OCI-LY7 (cell line): ENCODE measurements at regions of chr5 and their contacts with region 1.

Region 1: DNA sequence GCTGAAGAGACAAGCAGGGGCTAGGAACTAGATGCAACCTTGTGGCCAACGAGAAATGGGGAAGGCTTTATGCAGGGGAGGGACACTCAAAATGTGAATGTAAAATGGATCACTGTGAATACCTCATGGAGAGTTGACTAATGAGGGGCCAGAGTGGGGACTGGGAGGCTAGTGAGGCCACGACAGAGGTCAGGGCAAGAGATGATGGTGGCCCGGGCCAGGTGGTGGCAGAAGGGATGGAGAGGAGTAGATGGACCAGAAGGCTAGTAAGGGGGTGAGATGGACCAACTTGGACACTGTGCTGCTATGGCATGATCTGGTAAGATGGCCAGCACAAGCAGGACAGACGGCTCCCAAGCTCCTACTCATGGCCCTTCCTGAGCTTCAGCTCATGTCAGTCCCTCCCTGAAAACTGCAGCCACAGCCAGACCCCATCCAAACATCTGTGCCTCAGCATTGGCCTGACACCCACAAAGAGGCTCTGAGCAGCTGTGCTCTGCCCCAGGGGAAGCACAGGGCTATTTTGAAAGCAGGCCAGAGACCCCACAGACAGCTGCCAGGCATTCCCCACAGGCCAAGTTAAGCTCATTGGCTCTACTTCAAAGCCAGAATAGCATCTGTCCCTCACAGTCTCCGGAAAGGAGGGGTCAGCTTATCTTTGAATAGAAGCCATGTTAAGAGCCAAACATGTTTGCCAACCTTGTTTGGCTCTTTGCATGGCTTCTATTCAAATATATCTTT is 22.1 kb downstream of the P4HA2 start:
- DNase-seq: peak; percentile 94
- H3K4me3 ChIP-seq: peak overlapping the region; percentile 27
- H3K27ac ChIP-seq: peak overlapping the region; percentile 91
- H3K4me1 ChIP-seq: peaks cover 98% of the 10 kb centered on the region
- CTCF ChIP-seq: no peak

Region 2: GRCh38 chr5:132073231-132074013 is 132.1 kb before region 1 on chr5 and contains the start of gene CSF2:
- CTCF ChIA-PET with region 1: no interaction called
- POLR2A ChIA-PET with region 1: no interaction called
- intact Hi-C with region 1: no loop called
- DNase-seq: no peak
- H3K4me3 ChIP-seq: no peak within 1 kb of the TSS
- H3K27ac ChIP-seq: no peak within 1 kb of the TSS
- H3K4me1 ChIP-seq: no peaks in the 10 kb centered on the region
- CTCF ChIP-seq: no peak
- total RNA-seq, gene CSF2: not detected in 2 replicates

Region 3: DNA sequence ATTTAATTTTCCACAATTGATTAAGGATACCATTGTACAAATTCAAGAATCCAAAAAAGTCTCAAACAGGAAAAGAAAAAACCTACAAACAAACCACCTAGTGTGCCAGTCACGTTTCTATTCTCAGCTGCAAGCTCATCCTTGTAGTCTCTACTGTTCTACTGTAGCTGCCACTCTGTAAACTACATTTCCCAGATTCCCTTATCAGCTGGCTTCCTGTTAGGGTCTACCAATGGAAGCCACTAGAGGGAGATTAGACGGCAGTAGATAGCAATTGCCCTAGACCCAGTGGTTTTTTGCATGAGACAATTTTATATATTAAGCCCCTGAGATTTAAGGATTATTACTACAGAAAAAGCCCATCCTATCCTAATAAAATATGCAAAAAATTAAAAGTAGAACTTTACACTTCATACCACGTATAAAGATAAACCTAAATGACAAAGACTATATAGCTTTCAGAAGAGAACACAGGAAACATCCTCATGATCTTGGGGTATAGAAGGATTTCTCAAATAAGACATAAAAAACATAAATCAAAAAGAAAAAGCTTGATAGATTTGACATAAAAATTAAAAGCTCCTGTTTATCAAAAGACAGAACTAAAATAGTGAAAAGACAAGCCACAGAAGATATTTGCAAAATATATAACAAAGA is 15.3 kb before region 1 on chr5:
- CTCF ChIA-PET with region 1: interaction called, 4 read pairs
- POLR2A ChIA-PET with region 1: interaction called, 12 read pairs
- intact Hi-C with region 1: no loop called
- DNase-seq: peak; percentile 85
- H3K4me3 ChIP-seq: no peak overlapping the region
- H3K27ac ChIP-seq: no peak overlapping the region
- H3K4me1 ChIP-seq: peaks cover 27% of the 10 kb centered on the region
- CTCF ChIP-seq: peak; percentile 90

Region 4: GRCh38 chr5:132225165-132226032 is 19.8 kb after region 1 on chr5:
- CTCF ChIA-PET with region 1: interaction called, 7 read pairs
- POLR2A ChIA-PET with region 1: interaction called, 13 read pairs
- intact Hi-C with region 1: no loop called
- DNase-seq: no peak
- H3K4me3 ChIP-seq: no peak overlapping the region
- H3K27ac ChIP-seq: no peak overlapping the region
- H3K4me1 ChIP-seq: peaks cover 48% of the 10 kb centered on the region
- CTCF ChIP-seq: no peak